ENCODE measurements at regions of chr2 and their contacts with region 1.

Region 1: GRCh38 chr2:158968396-158969161 is at the start of gene TANC1:
- DNase-seq: peak; percentile 92
- H3K4me3 Mint-ChIP-seq: peak within 1 kb of the TSS; percentile 90
- H3K27ac Mint-ChIP-seq: peak within 1 kb of the TSS; percentile 90
- H3K4me1 Mint-ChIP-seq: peaks cover 36% of the 10 kb centered on the region
- H3K27me3 Mint-ChIP-seq: no peaks in the 10 kb centered on the region
- CTCF ChIP-seq: no peak
- total RNA-seq, gene TANC1: 31.0 and 35.3 TPM in 2 replicates

Region 2: DNA sequence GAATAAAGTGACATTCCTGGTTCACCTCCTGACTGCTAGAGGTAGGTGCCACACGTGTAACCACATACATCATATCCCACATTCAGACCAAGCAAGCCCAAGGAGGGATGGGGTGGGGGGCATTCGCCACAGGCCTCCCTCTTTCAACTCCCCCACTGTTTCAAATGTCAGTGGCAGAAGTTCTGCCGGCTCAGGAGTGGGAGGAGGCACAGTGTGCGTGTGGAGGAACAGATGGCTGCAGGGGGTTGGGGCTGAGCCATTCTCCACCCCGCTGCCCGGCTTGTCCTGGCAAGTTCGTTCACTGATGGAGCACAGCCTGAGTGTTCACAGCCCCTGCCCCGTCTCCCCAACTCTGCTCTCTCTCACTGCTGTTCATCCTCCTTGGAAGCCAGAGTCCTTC is 75.6 kb before region 1 on chr2:
- CTCF ChIA-PET with region 1: interaction called, 4 read pairs
- POLR2A ChIA-PET with region 1: interaction called, 48 read pairs
- intact Hi-C with region 1: no loop called
- DNase-seq: peak; percentile 91
- H3K4me3 Mint-ChIP-seq: peak overlapping the region; percentile 49
- H3K27ac Mint-ChIP-seq: peak overlapping the region; percentile 97
- H3K4me1 Mint-ChIP-seq: peaks cover 46% of the 10 kb centered on the region
- H3K27me3 Mint-ChIP-seq: no peaks in the 10 kb centered on the region
- CTCF ChIP-seq: no peak

Region 3: DNA sequence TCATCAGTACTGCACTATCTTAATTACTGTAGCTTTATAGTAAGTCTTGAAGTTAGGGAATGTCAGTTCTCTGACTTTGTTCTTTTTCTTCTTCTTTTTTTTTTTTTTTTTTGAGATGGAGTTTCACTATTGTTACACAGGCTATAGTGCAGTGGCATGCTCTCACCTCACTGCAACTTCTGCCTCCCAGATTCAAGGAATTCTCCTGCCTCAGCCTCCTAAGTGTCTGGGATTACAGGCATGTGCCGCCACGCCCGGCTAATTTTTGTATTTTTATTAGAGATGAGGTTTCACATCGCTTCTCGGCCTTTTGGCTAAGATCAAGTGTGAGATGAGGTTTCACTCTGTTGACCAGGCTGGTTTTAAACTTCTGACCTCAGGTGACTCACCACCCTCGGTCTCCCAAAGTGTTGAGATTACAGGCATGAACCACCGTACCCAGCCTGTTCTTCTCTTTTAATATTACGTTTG is 42.1 kb before region 1 on chr2:
- CTCF ChIA-PET with region 1: interaction called, 5 read pairs
- POLR2A ChIA-PET with region 1: interaction called, 9 read pairs
- intact Hi-C with region 1: loop called (anchors 1 kb)
- DNase-seq: peak; percentile 81
- H3K4me3 Mint-ChIP-seq: peak overlapping the region; percentile 35
- H3K27ac Mint-ChIP-seq: peak overlapping the region; percentile 70
- H3K4me1 Mint-ChIP-seq: peaks cover 22% of the 10 kb centered on the region
- H3K27me3 Mint-ChIP-seq: no peaks in the 10 kb centered on the region
- CTCF ChIP-seq: no peak

Region 4: DNA sequence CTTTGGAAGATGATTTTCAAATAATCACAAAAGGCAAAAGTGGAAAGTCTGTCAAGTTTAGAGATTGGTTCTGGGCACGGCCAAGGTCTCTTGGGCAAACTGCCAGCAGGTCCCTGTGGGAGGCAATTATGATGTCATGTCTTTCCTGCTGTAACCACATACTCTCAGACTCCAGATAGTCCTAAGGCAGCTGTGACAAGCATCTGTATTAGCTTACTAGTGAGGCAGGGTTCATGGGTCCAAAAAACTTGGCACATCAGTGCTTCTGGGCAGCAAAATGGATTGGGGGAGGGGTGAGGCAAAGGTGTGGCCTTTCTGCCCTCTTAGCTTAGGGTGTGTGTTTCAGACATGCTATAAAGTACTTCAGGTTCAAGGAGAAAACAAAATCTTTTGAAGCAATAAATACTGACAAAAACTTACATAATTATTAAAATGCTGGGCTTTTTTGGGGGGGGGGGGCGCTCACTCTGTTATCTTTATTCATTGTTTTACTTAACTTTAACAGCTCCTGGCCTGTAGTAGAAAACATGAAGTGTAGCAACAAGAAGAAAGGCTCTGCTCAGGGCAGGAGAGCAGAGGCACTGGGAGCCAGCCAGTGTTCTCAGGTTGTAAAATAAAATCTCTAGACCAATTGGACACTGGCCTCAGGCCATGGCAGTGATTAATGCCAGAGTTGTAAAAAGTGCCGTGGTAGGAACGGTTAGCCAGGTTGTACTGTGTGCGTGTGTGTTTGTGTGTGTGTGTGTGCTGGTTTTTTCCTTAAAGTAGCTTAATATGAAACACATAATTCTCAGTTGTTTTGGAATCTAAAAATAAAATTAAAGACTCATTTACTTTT is 14.4 kb before region 1 on chr2:
- CTCF ChIA-PET with region 1: interaction called, 25 read pairs
- POLR2A ChIA-PET with region 1: interaction called, 123 read pairs
- intact Hi-C with region 1: no loop called
- DNase-seq: peak; percentile 93
- H3K4me3 Mint-ChIP-seq: peak overlapping the region; percentile 7
- H3K27ac Mint-ChIP-seq: peak overlapping the region; percentile 75
- H3K4me1 Mint-ChIP-seq: peaks cover 14% of the 10 kb centered on the region
- H3K27me3 Mint-ChIP-seq: no peaks in the 10 kb centered on the region
- CTCF ChIP-seq: no peak

Region 5: DNA sequence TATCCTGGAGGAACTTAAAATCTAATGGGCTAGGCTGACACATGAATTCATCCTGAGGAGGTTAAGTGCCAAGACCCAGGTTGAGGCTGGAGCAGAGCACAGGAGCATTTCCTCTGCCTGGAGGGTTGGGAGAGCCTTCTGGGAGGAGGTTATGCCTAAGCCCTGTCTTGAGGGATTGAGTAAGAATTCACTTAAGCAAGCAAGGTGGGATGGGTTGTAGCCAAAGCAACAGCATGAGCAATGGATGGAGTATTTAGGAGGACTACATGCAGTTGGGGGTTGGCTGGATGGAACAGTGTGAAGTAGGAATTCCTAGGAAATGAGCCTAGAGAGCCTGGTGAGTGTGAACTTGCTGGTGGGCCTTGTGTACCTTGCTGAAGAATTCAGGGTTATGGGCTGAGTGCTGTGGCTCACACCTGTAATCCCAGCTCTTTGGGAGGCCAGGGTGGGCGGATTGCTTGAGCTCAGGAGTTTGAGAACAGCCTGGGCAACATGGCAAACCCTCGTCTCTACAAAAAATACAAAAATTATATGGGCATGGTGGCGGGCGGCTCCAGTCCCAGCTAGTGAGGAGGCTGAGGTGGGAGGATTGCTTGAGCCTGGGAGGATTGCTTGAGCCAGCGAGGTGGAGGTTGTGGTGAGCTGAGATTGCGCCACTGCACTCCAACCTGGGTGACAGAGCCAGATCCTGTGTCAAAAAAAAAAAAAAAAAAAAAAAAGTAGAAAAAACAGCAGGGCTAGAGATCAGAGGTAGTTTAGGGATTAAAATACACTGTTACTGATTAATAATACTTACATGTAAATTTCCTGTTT is 22.0 kb after region 1 on chr2:
- CTCF ChIA-PET with region 1: interaction called, 5 read pairs
- POLR2A ChIA-PET with region 1: interaction called, 43 read pairs
- intact Hi-C with region 1: loop called (anchors 1 kb)
- DNase-seq: peak; percentile 98
- H3K4me3 Mint-ChIP-seq: peak overlapping the region; percentile 52
- H3K27ac Mint-ChIP-seq: peak overlapping the region; percentile 73
- H3K4me1 Mint-ChIP-seq: peaks cover 48% of the 10 kb centered on the region
- H3K27me3 Mint-ChIP-seq: no peaks in the 10 kb centered on the region
- CTCF ChIP-seq: no peak

Region 6: DNA sequence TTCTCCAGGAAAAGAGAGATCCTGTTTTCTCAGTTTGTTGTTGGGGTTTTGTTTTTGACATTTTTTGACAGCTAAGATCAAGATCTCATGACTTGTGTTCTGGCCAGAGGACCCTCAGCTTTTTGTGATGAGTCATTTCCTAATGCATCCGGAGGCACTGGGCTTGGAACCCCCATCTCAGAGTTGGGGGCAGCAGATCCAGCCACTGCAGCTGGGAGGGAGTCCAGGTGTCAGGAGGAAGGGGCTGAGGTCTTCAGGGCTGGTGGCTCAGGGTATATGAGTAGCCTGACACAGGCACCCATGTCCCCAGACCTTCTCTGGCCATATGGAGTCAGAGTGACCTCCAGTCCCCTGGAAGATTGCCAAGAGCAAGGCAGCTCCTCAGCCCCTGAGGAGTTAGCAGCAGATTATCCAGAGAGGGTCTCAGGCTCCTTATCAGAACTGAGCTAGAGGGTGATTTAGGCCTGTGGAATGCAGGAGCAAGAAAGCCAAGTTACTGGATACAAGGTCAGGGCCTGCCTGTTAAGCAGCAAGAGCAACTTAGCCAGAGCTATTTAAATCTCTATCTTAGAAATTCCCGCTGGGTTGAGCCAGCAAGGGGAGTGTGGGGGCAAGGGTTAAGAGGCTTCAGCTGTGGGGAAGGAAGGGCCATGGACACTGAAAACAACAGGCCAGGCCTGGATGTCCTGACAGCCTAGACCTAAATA is 62.2 kb after region 1 on chr2:
- CTCF ChIA-PET with region 1: interaction called, 3 read pairs
- POLR2A ChIA-PET with region 1: interaction called, 7 read pairs
- intact Hi-C with region 1: loop called (anchors 5 kb)
- DNase-seq: peak; percentile 31
- H3K4me3 Mint-ChIP-seq: no peak overlapping the region
- H3K27ac Mint-ChIP-seq: peak overlapping the region; percentile 69
- H3K4me1 Mint-ChIP-seq: peaks cover 32% of the 10 kb centered on the region
- H3K27me3 Mint-ChIP-seq: no peaks in the 10 kb centered on the region
- CTCF ChIP-seq: no peak

Region 7: GRCh38 chr2:159118115-159118858 is 149.7 kb after region 1 on chr2:
- CTCF ChIA-PET with region 1: interaction called, 7 read pairs
- POLR2A ChIA-PET with region 1: interaction called, 5 read pairs
- intact Hi-C with region 1: loop called (anchors 2 kb)
- DNase-seq: peak; percentile 88
- H3K4me3 Mint-ChIP-seq: no peak overlapping the region
- H3K27ac Mint-ChIP-seq: no peak overlapping the region
- H3K4me1 Mint-ChIP-seq: peaks cover 18% of the 10 kb centered on the region
- H3K27me3 Mint-ChIP-seq: no peaks in the 10 kb centered on the region
- CTCF ChIP-seq: peak; percentile 76

Measured in MCF 10A (cell line).